AG04449 (cell line): ENCODE measurements at regions of chr14 and their contacts with region 1.

Region 1: DNA sequence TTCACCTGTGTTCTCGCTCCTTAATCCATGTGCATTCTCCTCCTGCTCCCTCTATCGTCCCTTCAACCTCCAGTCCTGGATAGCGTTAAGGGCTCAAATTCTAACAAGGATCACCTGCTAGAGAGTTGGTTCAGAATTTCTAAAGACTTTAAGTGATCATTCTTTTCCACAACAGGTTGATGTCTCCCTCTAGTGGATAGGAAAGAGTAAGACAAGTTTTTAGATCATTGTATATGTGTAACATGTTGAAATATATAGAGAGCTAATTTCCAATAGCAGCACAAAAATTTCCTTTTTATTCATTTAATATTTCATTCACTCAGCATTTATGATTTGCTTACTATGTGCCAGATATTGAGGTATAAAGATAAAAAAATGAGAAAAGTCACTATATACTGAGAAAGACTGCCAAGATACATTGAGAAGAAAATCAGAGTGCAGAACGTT is 9.3 kb upstream of the ESR2 start:
- DNase-seq: no peak
- H3K4me3 ChIP-seq: no peak overlapping the region
- CTCF ChIP-seq: peak; percentile 58

Region 2: GRCh38 chr14:64012720-64013119 is 290.8 kb before region 1 on chr14:
- CTCF ChIA-PET with region 1: interaction called, 124 read pairs
- POLR2A ChIA-PET with region 1: no interaction called
- DNase-seq: no peak
- H3K4me3 ChIP-seq: no peak overlapping the region
- CTCF ChIP-seq: no peak

Region 3: GRCh38 chr14:64040044-64040443 is 263.4 kb before region 1 on chr14:
- CTCF ChIA-PET with region 1: interaction called, 86 read pairs
- POLR2A ChIA-PET with region 1: no interaction called
- DNase-seq: no peak
- H3K4me3 ChIP-seq: no peak overlapping the region
- CTCF ChIP-seq: peak; percentile 5

Region 4: GRCh38 chr14:64060648-64061096 is 242.8 kb before region 1 on chr14:
- CTCF ChIA-PET with region 1: interaction called, 10 read pairs
- POLR2A ChIA-PET with region 1: no interaction called
- DNase-seq: no peak
- H3K4me3 ChIP-seq: no peak overlapping the region
- CTCF ChIP-seq: peak; percentile 49

Region 5: DNA sequence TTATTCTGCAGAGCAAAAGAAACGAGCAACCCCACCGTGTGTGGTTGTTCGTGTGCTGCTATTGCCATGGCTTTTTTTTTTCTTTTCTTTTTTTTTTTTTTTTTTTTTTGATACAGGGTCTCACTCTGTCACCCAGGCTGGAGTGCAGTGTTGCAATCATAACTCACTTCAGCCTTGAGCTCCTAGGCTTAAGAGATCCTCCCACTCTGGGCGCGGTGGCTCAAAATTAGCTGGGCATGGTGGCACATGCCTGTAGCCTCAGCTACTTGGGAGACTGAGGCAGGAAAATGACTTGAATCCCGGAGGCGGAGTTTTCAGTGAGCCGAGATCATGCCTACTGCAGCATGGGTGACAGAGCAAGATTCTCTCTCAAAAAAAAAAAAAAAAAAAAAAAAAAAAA is 153.6 kb before region 1 on chr14:
- CTCF ChIA-PET with region 1: no interaction called
- POLR2A ChIA-PET with region 1: no interaction called
- DNase-seq: no peak
- H3K4me3 ChIP-seq: no peak overlapping the region
- CTCF ChIP-seq: no peak

Region 6: DNA sequence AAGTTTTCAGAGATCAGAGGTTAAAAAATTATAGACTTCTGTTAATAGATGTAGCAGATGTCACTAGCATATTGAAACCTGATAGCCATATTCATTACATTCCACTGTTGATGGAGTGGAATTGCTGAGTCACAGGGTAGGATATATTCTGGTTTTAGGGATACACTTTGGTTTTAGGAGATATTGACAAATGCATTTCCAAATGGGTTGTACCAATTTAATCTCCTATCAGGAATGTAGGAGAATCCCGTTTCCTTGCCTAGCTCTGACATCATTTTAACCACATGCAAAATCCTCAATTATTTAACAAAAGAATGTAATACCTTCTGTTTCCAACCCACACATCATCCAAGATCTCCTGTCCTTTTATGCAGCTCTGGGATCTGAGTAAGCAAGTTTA is 21.4 kb after region 1 on chr14:
- CTCF ChIA-PET with region 1: interaction called, 11 read pairs
- POLR2A ChIA-PET with region 1: no interaction called
- DNase-seq: no peak
- H3K4me3 ChIP-seq: no peak overlapping the region
- CTCF ChIP-seq: no peak